Posterior vena cava (tissue), 2 donors: ENCODE measurements at regions of chr9 and their contacts with region 1.

Region 1: GRCh38 chr9:72592502-72593403 is 71.3 kb downstream of the TMC1 start:
- DNase-seq: no peak

Region 2: GRCh38 chr9:72280913-72281500 is 311.7 kb before region 1 on chr9:
- intact Hi-C with region 1: loop called in 1 of 2 experiments (anchors 10 kb)
- DNase-seq: peak; percentile 90

Region 3: DNA sequence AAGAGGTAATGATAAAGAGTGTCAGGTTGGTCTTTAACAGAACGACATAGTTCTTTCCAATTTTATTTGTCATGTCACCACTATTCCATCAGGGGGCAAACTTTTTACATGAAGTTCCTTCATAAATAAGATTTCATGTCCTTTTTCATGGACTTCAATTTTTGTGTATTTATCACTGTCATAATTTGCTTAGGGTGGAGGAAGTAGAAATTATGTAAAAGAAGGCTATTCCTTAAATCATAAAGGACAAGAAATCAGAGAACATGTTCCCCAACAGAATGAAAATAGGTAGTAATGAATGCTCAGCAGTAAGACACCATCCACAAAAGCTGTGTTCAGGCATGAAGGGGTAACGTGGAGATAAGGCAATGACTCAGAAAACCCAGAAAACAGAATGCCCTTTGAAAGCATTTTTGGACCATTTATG is 300.5 kb before region 1 on chr9:
- intact Hi-C with region 1: loop called (anchors 5 to 10 kb)
- DNase-seq: no peak

Region 4: GRCh38 chr9:72356041-72356582 is 236.6 kb before region 1 on chr9:
- intact Hi-C with region 1: loop called in 1 of 2 experiments (anchors 5 kb)
- DNase-seq: no peak